Activated T-helper 2 cell treated with anti-CD3 and anti-CD28 coated beads, Interferon-gamma antibody, Interleukin-2, Interleukin-4, amounts not matched to agents 10 μg/mL and 5 μg/mL and 100 μg/mL, durations not matched to agents 14 hours and 24 hours and 36 hours (primary cell): ENCODE measurements at regions of chr1 and their contacts with region 1.

Region 1: GRCh38 chr1:176897350-176898236 is 266.9 kb downstream of the ASTN1 start:
- DNase-seq: peak; percentile 15
- H3K4me3 Mint-ChIP-seq: no peak overlapping the region
- H3K27ac Mint-ChIP-seq: no peak overlapping the region
- H3K4me1 Mint-ChIP-seq: peaks cover 4% of the 10 kb centered on the region
- H3K27me3 Mint-ChIP-seq: peaks cover 2% of the 10 kb centered on the region

Region 2: GRCh38 chr1:176880954-176881595 is 16.5 kb before region 1 on chr1:
- intact Hi-C with region 1: no loop called
- DNase-seq: peak; percentile 19
- H3K4me3 Mint-ChIP-seq: no peak overlapping the region
- H3K27ac Mint-ChIP-seq: no peak overlapping the region
- H3K4me1 Mint-ChIP-seq: no peaks in the 10 kb centered on the region
- H3K27me3 Mint-ChIP-seq: no peaks in the 10 kb centered on the region

Region 3: DNA sequence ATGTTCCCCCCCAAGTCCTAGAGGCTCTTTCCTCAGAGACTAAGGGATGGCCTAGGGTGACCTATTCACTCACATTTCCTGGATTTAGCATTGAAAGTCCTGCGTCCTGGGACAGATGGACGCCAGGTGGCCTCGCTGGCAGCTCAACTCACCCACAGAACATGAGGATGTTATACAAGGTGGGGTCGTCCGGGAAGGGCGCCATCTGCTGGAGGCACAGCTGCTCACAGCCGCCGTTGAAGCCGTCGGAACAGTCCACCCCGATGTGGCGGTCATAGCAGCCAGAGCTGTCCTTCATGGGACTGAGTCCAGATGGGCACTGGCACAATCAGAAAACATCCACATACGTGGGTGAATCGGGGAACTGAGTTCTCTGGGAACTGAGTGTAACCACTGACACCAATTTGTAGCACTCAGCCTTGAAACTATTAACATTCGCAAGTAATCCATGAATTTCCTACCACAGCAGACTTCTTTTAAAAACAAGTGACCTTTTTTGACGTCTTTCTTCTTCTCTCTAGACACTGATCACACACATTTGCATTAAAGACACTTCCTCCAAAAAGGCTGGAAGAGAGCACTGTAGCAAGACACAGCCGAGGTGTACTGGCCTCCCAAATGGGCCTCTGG is 51.6 kb after region 1 on chr1:
- intact Hi-C with region 1: loop called (anchors 2 kb)
- DNase-seq: peak; percentile 8
- H3K4me3 Mint-ChIP-seq: no peak overlapping the region
- H3K27ac Mint-ChIP-seq: no peak overlapping the region
- H3K4me1 Mint-ChIP-seq: no peaks in the 10 kb centered on the region
- H3K27me3 Mint-ChIP-seq: no peaks in the 10 kb centered on the region

Region 4: GRCh38 chr1:177181631-177182291 is 284.2 kb after region 1 on chr1:
- intact Hi-C with region 1: loop called (anchors 2 kb)
- DNase-seq: peak; percentile 15
- H3K4me3 Mint-ChIP-seq: peak overlapping the region; percentile 23
- H3K27ac Mint-ChIP-seq: no peak overlapping the region
- H3K4me1 Mint-ChIP-seq: peaks cover 2% of the 10 kb centered on the region
- H3K27me3 Mint-ChIP-seq: peaks cover 28% of the 10 kb centered on the region